Vagina (tissue), 2 donors: ENCODE measurements at regions of chr13 and their contacts with region 1.

Region 1: DNA sequence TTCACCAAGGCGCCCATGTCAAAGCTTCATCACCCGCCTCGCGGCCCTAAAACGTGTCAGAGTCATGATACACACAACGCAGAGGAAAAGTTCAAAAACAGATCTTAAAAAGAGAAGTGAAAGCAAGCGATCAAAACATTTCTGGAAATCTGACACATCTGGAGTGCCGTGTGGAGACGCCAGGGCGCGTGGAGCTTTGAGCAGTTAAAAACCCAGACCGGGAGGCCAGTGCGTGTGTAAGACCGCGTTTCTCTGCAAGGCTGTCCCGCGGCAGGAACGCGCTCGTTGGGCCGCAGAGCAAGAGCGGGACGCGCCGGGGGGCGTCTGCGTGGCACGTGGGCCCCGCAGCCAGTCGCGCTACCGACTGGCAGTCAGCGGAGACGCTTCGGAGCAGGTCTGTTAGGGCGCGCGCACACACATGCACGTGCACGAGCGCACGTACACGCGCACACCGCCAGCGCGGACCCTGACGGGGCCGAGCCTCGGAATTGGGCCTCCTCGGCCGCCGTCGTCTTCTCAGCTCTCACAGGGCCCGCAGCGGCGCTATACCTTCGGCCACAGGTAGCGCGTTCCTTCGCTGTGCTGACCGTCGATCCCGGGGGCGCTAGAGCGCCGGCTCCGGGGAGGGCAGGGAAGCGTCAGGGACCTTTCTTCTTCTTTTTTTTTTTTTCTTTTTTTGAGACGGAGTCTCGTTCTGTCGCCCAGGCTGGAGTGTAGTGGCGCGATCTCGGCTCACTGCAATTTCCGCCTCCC is 35.8 kb downstream of the RNF6 start:
- DNase-seq: peak in 1 of 2 donors; percentile 91
- H3K4me3 ChIP-seq: peak overlapping the region; percentile 50 to 54
- H3K27ac ChIP-seq: peak overlapping the region; percentile 74
- H3K4me1 ChIP-seq: peaks cover 20% of the 10 kb centered on the region
- H3K27me3 ChIP-seq: no peaks in the 10 kb centered on the region
- CTCF ChIP-seq: peak in 1 of 3 experiments; percentile 20
- POLR2A ChIP-seq: no peak

Region 2: DNA sequence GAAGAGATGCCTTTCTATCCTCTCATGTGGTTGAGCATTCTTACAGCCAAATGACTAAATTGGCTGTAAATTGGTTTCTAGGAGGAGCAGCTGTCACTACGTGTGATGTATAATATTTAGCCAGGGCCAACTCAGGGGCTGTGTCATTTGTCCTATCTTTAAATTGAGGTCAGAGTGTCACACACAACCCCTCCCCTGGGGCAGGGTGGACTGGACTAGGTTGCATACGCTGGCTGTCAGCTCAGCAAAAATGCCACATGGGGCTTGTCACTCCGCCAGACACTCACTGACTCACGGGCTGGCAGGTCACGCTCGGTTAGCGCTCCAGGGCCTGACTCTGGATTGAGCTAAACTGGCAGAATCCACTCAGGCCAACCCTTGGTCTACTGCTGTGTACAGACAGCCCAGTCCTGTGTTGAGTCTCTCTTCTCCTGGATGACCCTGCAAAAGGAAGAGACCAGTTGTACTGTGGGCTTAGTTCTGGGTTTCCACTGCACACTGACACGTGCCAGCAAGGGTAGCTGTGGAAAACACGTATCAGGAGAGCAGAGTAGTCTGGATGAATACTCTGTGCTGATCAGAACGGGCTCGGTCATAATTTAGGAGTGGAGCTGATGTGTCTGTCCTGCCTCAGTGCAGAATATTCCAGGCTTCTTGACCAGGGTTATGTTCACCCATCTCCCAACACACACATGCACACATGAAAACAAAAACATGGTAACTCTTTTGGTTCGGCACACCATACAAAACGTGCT is 163.6 kb before region 1 on chr13:
- intact Hi-C with region 1: no loop called
- DNase-seq: peak in 1 of 2 donors; percentile 81
- H3K4me3 ChIP-seq: no peak overlapping the region
- H3K27ac ChIP-seq: no peak overlapping the region
- H3K4me1 ChIP-seq: no peaks in the 10 kb centered on the region
- H3K27me3 ChIP-seq: no peaks in the 10 kb centered on the region
- CTCF ChIP-seq: no peak
- POLR2A ChIP-seq: no peak

Region 3: DNA sequence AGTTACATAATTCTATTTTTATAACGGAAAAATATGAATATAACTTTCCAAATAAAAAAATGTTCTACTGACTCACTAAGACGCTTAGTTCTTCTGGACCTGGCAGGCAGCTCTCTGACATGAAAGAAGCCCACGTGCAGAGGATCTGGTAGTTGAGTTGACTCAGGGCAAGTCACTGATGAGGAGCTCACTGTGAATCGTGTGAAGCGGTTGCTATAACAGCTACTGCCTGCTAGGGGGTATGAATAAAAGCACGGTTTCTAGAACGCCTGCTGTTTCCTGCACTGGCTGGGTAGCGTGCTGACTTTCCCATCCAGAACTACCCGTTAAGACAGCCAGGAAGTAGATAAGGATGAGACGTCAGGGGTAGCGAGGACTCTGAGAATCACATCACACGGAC is 316.5 kb after region 1 on chr13:
- intact Hi-C with region 1: loop called (anchors 10 kb)
- DNase-seq: no peak
- H3K4me3 ChIP-seq: no peak overlapping the region
- H3K27ac ChIP-seq: no peak overlapping the region
- H3K4me1 ChIP-seq: no peaks in the 10 kb centered on the region
- H3K27me3 ChIP-seq: no peaks in the 10 kb centered on the region
- CTCF ChIP-seq: no peak
- POLR2A ChIP-seq: no peak

Region 4: GRCh38 chr13:27130979-27131623 is 944.8 kb after region 1 on chr13:
- intact Hi-C with region 1: no loop called
- DNase-seq: no peak
- H3K4me3 ChIP-seq: no peak overlapping the region
- H3K27ac ChIP-seq: no peak overlapping the region
- H3K4me1 ChIP-seq: peaks cover 31% of the 10 kb centered on the region
- H3K27me3 ChIP-seq: no peaks in the 10 kb centered on the region
- CTCF ChIP-seq: no peak
- POLR2A ChIP-seq: no peak